Naive thymus-derived CD4-positive, alpha-beta T cell (primary cell): ENCODE measurements at regions of chr15 and their contacts with region 1.

Region 1: DNA sequence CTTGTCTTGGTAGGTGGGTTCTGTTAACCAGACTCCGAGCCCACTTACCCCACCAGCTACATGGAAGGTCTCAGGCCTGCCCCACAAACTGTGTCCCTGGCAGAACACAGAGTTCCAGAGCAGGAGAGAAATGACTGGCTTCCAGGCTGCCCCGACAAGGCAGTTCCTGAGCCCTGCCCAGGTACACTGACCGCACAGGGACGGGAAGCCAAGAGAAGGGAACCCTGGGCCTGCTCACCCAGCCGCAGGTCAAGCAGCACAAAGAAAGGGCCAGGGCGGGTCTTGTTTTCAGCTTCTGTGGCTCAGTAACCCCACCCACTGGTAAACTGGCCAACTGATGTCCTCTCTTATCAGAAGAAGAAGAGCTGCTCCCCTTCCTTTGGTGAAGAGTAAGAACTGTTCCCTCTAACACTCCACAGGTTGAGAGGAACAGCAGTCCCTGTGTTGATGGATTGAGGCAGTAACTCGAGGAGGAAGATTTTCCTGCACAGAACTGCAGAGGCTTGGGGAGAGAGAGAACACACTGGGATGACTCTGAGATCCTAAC is 68.4 kb downstream of the CRTC3 start:
- DNase-seq: no peak
- ATAC-seq: peak; percentile 26
- H3K4me3 ChIP-seq: peak overlapping the region; percentile 7
- H3K4me3 Mint-ChIP-seq: peak overlapping the region; percentile 48 to 83 (median 78)
- H3K27ac ChIP-seq: peak overlapping the region; percentile 73
- H3K27ac Mint-ChIP-seq: peak overlapping the region; percentile 91 to 99 (median 98)
- H3K4me1 ChIP-seq: peaks cover 31 to 79% of the 10 kb centered on the region in 2 donors
- H3K4me1 Mint-ChIP-seq: peaks cover 73 to 96% (median 87%) of the 10 kb centered on the region in 7 donors
- H3K27me3 ChIP-seq: no peaks in the 10 kb centered on the region
- H3K27me3 Mint-ChIP-seq: no peaks in the 10 kb centered on the region

Region 2: DNA sequence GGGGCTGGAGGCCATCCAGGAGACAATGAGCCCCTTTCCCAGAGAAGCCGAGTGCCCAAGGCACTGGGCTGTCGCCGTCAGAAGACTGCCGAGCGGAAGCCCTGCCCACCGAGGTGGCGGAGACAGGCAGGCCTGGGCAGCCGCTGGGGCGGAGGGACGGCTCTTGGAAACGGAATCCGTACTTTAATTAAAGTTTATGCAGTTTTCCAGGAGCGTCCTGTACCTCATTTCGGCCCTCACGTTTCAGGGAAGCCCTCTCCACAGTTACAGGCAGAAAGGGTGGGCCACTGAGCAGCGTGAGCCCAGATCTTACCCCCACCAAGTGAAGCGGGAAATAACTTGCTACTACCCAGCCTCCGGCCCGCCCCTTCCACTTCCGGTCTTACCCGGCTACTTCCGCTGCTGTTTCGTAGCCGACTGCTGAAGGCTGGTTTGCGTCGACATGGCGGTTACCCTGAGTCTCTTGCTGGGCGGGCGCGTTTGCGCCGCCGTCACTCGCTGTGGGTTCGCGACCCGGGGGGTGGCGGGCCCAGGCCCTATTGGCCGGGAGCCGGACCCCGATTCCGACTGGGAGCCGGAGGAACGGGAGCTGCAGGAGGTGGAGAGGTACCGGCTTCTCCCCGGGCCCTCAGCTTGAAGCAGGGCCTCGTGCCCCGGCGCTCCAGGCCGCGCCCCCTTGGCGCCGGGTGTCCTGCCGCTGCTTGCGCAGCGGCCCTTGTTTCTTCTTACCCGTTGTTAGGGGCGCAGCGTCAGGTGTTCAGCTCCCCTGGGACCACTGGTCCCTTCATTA is 332.6 kb before region 1 on chr15 and contains the start of gene NGRN:
- CTCF ChIA-PET with region 1: no interaction called
- POLR2A ChIA-PET with region 1: no interaction called
- intact Hi-C with region 1: no loop called
- DNase-seq: peak; percentile 81 to 96 (median 93)
- ATAC-seq: peak; percentile 94
- H3K4me3 ChIP-seq: peak within 1 kb of the TSS; percentile 84
- H3K4me3 Mint-ChIP-seq: peak within 1 kb of the TSS; percentile 95 to 99 (median 97)
- H3K27ac ChIP-seq: peak within 1 kb of the TSS; percentile 96
- H3K27ac Mint-ChIP-seq: peak within 1 kb of the TSS; percentile 98 to 100 (median 99)
- H3K4me1 ChIP-seq: peaks cover 36 to 40% of the 10 kb centered on the region in 2 donors
- H3K4me1 Mint-ChIP-seq: peaks cover 22 to 60% (median 48%) of the 10 kb centered on the region in 7 donors
- H3K27me3 ChIP-seq: no peaks in the 10 kb centered on the region
- H3K27me3 Mint-ChIP-seq: no peaks in the 10 kb centered on the region
- total RNA-seq, gene NGRN: 34.1 to 51.5 (median 48.4) TPM

Region 3: GRCh38 chr15:90352109-90352893 is 245.8 kb before region 1 on chr15 and contains the start of gene ZNF774:
- CTCF ChIA-PET with region 1: no interaction called
- POLR2A ChIA-PET with region 1: no interaction called
- intact Hi-C with region 1: loop called in 1 of 2 experiments (anchors 1 kb)
- DNase-seq: peak; percentile 74 to 95 (median 93)
- ATAC-seq: peak; percentile 99
- H3K4me3 ChIP-seq: peak within 1 kb of the TSS; percentile 91
- H3K4me3 Mint-ChIP-seq: peak within 1 kb of the TSS; percentile 86 to 92 (median 89)
- H3K27ac ChIP-seq: peak within 1 kb of the TSS; percentile 73
- H3K27ac Mint-ChIP-seq: peak within 1 kb of the TSS in 8 of 9 donors; percentile 8 to 86 (median 66)
- H3K4me1 ChIP-seq: peaks cover 5 to 11% of the 10 kb centered on the region in 2 donors
- H3K4me1 Mint-ChIP-seq: peaks cover 7 to 29% (median 9%) of the 10 kb centered on the region in 7 donors
- H3K27me3 ChIP-seq: no peaks in the 10 kb centered on the region
- H3K27me3 Mint-ChIP-seq: peaks cover 0 to 17% (median 0%) of the 10 kb centered on the region in 5 donors
- total RNA-seq, gene ZNF774: 0.22 to 2.0 (median 1.5) TPM

Region 4: DNA sequence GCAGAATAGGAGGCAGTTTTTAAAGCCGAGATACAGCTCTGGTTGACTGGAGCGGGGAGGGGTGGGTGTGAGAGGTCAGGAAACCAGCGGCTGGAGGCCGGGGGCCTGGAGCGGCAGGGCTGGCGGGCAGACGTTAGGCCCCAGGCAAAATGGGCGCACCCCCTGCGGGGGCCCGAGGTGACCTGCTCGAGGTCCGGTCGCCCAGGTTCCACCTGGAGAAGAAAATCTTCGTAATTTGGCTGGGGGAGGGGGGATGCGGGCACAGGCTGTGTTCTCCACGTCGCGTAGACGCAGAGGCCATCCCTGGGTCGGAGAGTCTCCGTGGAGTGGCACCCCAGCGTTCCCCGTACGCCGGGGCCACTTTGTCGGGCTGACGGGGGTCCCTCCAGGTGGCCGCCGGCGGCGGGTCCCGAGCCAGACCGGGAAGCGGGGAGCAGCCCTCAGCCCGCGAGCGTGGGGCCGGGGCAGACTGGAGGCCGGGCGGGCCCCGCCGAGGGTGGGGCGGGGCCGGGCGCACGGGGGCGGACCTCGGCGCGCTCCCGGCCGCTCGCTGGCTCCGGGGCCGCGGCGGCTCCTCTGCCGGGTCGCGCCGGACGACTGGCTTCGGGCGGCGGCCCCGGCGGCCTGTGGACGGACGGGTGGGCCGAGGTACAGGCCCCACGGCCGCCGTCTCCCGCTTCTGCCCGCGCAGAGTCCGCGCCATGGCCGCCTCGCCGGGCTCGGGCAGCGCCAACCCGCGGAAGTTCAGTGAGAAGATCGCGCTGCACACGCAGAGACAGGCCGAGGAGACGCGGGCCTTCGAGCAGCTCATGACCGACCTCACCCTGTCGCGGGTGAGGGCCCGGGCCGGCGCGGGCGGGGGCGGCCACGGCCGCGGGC is 68.5 kb before region 1 on chr15 and contains the start of gene CRTC3:
- CTCF ChIA-PET with region 1: interaction called, 8 read pairs
- POLR2A ChIA-PET with region 1: interaction called, 8 read pairs
- intact Hi-C with region 1: loop called (anchors 1 to 2 kb)
- DNase-seq: peak; percentile 49 to 75 (median 67)
- ATAC-seq: peak; percentile 88
- H3K4me3 ChIP-seq: peak within 1 kb of the TSS; percentile 94
- H3K4me3 Mint-ChIP-seq: peak within 1 kb of the TSS; percentile 96 to 100 (median 97)
- H3K27ac ChIP-seq: peak within 1 kb of the TSS; percentile 92
- H3K27ac Mint-ChIP-seq: peak within 1 kb of the TSS; percentile 80 to 98 (median 94)
- H3K4me1 ChIP-seq: peaks cover 18% of the 10 kb centered on the region in 2 donors
- H3K4me1 Mint-ChIP-seq: peaks cover 34 to 49% (median 46%) of the 10 kb centered on the region in 7 donors
- H3K27me3 ChIP-seq: no peaks in the 10 kb centered on the region
- H3K27me3 Mint-ChIP-seq: no peaks in the 10 kb centered on the region
- total RNA-seq, gene CRTC3: 104 to 132 (median 109) TPM

Region 5: DNA sequence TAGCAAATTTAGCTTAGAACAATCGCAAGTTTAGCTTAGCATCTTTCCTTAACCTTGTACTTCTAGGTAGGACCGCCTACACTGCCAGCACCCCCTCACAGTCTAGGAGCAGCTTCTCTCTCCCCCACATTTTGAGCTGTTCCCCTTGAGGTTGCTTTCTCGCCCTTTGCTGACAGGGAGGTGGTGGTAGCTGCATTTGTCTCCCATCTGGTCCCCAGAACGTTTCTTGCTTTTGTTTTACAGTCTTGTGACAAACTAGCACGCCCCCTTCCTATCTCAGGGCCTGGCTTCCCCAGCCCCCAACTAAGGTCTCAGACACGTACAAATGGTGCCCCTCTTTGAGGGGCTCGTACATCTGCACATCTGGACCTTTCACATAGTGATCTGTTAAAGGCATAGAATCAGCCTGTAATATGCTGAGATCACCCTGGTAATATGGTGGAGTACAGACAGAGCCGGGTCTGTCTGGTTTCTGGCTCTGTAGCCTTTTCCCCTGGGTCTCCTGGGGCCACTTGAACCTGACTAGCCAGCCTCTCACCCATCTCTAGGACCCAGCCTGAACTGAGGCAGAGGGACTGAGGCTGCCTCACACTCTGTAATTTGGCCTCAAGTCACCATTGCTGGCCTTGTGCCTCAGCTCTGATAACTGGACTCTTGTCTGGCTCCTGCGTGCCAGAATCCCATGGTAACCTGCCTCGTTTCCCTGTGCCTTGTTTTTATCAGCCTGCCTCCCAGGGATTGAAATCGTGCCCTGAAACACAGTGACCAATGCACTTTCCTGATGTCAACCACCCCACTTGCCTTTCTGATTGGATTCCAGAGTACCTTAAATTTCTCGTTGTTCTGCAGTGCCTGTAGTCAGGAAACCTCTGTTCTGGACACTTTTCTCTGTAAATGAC is 40.7 kb before region 1 on chr15:
- CTCF ChIA-PET with region 1: interaction called, 5 read pairs
- POLR2A ChIA-PET with region 1: interaction called, 23 read pairs
- intact Hi-C with region 1: loop called (anchors 1 kb)
- DNase-seq: peak in 1 of 9 donors; percentile 18
- ATAC-seq: no peak
- H3K4me3 ChIP-seq: no peak overlapping the region
- H3K4me3 Mint-ChIP-seq: peak overlapping the region; percentile 22 to 70 (median 54)
- H3K27ac ChIP-seq: peak overlapping the region; percentile 14
- H3K27ac Mint-ChIP-seq: peak overlapping the region; percentile 57 to 95 (median 86)
- H3K4me1 ChIP-seq: peaks cover 10 to 50% of the 10 kb centered on the region in 2 donors
- H3K4me1 Mint-ChIP-seq: peaks cover 56 to 89% (median 85%) of the 10 kb centered on the region in 7 donors
- H3K27me3 ChIP-seq: no peaks in the 10 kb centered on the region
- H3K27me3 Mint-ChIP-seq: no peaks in the 10 kb centered on the region

Region 6: DNA sequence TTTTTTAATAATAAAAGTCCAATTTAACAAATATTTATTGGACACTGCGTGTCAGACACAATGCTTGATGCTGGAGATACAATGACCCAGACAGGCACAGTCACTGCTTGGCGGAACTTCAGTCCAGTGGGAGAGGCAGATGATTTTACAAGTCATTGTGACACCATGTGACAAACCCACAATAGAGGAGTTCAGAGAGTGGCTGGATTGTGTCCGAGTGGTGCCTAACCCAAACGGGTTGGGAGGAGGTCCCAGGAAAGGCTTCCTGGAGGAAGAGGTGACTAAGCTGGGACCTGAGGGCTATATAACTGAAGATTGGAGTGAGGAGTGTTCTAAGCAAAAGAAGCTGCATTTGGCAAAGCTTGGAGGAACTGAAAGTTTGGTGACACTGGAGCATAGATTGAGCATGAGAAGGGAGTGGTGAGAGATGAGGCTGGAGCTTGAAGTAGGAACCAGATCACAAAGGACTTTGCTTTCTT is 27.0 kb before region 1 on chr15:
- CTCF ChIA-PET with region 1: interaction called, 4 read pairs
- POLR2A ChIA-PET with region 1: interaction called, 8 read pairs
- intact Hi-C with region 1: loop called (anchors 1 kb)
- DNase-seq: no peak
- ATAC-seq: peak; percentile 71
- H3K4me3 ChIP-seq: no peak overlapping the region
- H3K4me3 Mint-ChIP-seq: peak overlapping the region; percentile 1 to 76 (median 54)
- H3K27ac ChIP-seq: peak overlapping the region; percentile 22
- H3K27ac Mint-ChIP-seq: peak overlapping the region; percentile 3 to 94 (median 86)
- H3K4me1 ChIP-seq: peaks cover 39 to 92% of the 10 kb centered on the region in 2 donors
- H3K4me1 Mint-ChIP-seq: peaks cover 55 to 97% (median 89%) of the 10 kb centered on the region in 7 donors
- H3K27me3 ChIP-seq: no peaks in the 10 kb centered on the region
- H3K27me3 Mint-ChIP-seq: no peaks in the 10 kb centered on the region

Region 7: GRCh38 chr15:90620379-90621067 is 22.4 kb after region 1 on chr15:
- CTCF ChIA-PET with region 1: interaction called, 12 read pairs
- POLR2A ChIA-PET with region 1: interaction called, 4 read pairs
- intact Hi-C with region 1: loop called in 1 of 2 experiments (anchors 1 kb)
- DNase-seq: peak in 5 of 9 donors; percentile 28 to 45 (median 39)
- ATAC-seq: peak; percentile 80
- H3K4me3 ChIP-seq: peak overlapping the region; percentile 32
- H3K4me3 Mint-ChIP-seq: peak overlapping the region; percentile 42 to 82 (median 75)
- H3K27ac ChIP-seq: peak overlapping the region; percentile 53
- H3K27ac Mint-ChIP-seq: peak overlapping the region; percentile 85 to 97 (median 90)
- H3K4me1 ChIP-seq: peaks cover 0 to 18% of the 10 kb centered on the region in 2 donors
- H3K4me1 Mint-ChIP-seq: peaks cover 21 to 44% (median 38%) of the 10 kb centered on the region in 7 donors
- H3K27me3 ChIP-seq: no peaks in the 10 kb centered on the region
- H3K27me3 Mint-ChIP-seq: no peaks in the 10 kb centered on the region